Activated CD4-positive, alpha-beta memory T cell treated with anti-CD3 and anti-CD28 coated beads for 36 hours (primary cell): ENCODE measurements at regions of chr9 and their contacts with region 1.

Region 1: DNA sequence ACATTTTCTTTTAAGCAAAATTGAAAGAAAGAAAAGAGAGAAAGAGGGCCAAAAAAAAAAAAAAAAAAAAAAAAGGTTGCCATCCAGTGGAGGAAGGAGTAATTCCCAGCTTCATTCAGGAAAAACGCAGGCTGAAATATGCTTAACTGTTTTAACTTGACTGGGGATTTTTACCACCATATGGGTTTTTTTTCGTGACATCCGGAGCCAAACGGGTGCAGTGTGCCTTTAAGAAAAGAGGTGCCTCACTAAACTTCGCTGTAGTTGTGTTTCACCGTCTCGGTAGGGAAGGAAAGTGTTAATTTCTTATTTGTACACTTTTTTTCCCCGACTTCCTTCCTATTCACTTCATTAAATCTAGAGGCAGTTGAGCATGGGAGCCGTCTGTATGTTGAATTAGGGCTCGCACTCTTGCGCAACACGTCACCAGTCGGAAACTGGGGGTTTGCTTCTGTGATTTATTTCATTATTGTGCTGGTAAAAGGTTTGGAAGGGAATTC is 143.0 kb downstream of the SMARCA2 start:
- DNase-seq: peak; percentile 50
- H3K4me3 Mint-ChIP-seq: peak overlapping the region; percentile 77
- H3K27ac Mint-ChIP-seq: peak overlapping the region; percentile 85
- H3K4me1 Mint-ChIP-seq: peaks cover 57% of the 10 kb centered on the region
- H3K27me3 Mint-ChIP-seq: no peaks in the 10 kb centered on the region

Region 2: GRCh38 chr9:2023532-2023931 is 134.6 kb before region 1 on chr9:
- CTCF ChIA-PET with region 1: no interaction called
- POLR2A ChIA-PET with region 1: interaction called, 6 read pairs
- intact Hi-C with region 1: loop called (anchors 2 kb)
- DNase-seq: peak; percentile 53
- H3K4me3 Mint-ChIP-seq: peak overlapping the region; percentile 38
- H3K27ac Mint-ChIP-seq: peak overlapping the region; percentile 86
- H3K4me1 Mint-ChIP-seq: peaks cover 94% of the 10 kb centered on the region
- H3K27me3 Mint-ChIP-seq: no peaks in the 10 kb centered on the region

Region 3: DNA sequence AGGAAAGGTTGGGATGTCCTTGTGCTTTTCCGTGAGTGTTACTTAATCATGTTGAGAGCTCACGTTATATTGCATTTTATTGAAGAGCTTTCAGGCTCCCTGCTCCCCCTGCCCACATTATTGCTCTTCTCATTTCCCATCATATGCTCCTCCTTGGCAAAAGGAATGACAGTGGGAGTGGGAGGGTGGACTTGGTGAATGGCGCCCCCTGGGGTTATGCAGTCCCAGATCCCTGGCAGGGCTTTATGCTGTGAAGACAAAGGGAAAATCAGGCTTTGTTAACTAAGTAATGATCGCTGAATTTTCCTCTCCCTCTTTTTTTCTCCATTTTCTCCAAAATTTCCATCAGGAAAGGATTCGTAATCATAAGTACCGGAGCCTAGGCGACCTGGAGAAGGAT is 23.6 kb after region 1 on chr9:
- CTCF ChIA-PET with region 1: interaction called, 6 read pairs
- POLR2A ChIA-PET with region 1: interaction called, 4 read pairs
- intact Hi-C with region 1: loop called (anchors 1 kb)
- DNase-seq: peak; percentile 29
- H3K4me3 Mint-ChIP-seq: no peak overlapping the region
- H3K27ac Mint-ChIP-seq: no peak overlapping the region
- H3K4me1 Mint-ChIP-seq: peaks cover 6% of the 10 kb centered on the region
- H3K27me3 Mint-ChIP-seq: no peaks in the 10 kb centered on the region

Region 4: GRCh38 chr9:2620919-2621679 is 462.9 kb after region 1 on chr9:
- CTCF ChIA-PET with region 1: no interaction called
- POLR2A ChIA-PET with region 1: no interaction called
- intact Hi-C with region 1: loop called (anchors 5 kb)
- DNase-seq: peak; percentile 86
- H3K4me3 Mint-ChIP-seq: peak overlapping the region; percentile 75
- H3K27ac Mint-ChIP-seq: peak overlapping the region; percentile 28
- H3K4me1 Mint-ChIP-seq: peaks cover 14% of the 10 kb centered on the region
- H3K27me3 Mint-ChIP-seq: peaks cover 49% of the 10 kb centered on the region

Region 5: DNA sequence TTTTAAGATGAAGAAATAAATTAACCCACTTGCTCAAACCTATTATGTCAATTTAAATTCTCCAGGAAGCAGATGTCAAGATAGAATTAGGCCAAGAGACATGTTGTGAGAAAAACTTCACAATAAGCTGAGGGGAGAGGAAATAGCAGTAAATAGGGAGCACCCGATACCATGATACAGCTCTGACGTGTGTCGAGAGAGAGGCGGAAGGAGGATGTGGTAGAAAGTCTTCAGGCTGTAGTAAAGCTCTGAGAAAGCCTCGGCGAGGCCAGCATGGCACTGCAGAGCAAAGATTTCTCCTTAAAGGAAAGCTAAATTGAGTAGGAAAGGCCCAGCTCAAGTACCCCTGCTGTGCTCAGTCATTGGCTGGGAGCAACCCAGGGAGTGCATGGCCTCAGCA is 691.8 kb after region 1 on chr9:
- CTCF ChIA-PET with region 1: no interaction called
- POLR2A ChIA-PET with region 1: no interaction called
- intact Hi-C with region 1: loop called (anchors 2 kb)
- DNase-seq: peak; percentile 18
- H3K4me3 Mint-ChIP-seq: no peak overlapping the region
- H3K27ac Mint-ChIP-seq: no peak overlapping the region
- H3K4me1 Mint-ChIP-seq: peaks cover 10% of the 10 kb centered on the region
- H3K27me3 Mint-ChIP-seq: no peaks in the 10 kb centered on the region